Sigmoid colon (tissue), 7 donors: ENCODE measurements at regions of chr6 and their contacts with region 1.

Region 1: DNA sequence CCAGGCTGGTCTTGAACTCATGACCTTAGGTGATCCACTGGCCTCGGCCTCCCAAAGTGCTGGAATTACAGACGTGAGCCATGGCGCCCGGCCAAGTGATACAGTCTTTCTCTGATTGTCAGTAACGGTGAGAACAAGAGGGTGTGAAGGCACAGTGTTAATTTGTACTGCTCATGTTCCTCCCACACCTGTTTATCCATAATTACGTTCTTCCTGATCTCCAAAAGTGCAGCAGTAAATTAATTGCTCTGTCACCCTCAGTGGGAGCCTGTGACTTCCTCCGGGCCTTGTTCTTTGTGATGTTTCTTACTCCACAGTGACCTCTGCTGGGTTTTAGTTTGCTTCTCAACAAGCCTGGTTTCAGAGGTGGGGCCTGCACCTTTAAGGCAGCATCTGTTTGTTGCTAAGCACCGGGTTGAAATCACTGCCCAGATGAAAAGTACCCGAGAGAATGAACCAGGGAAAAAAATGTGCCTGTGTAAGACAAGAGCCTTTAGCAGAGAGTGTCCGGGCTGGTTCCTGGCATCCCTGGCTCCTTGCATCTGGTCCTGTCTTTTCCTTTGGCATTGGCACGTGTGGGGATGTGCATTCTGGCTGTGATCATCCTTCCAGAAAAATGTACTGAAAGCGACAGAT is 89.1 kb upstream of the CLDN20 start:
- DNase-seq: peak; percentile 69
- H3K4me3 ChIP-seq: no peak overlapping the region
- H3K27ac ChIP-seq: peak overlapping the region in 1 of 4 donors; percentile 46
- H3K4me1 ChIP-seq: peaks cover 0 to 28% (median 21%) of the 10 kb centered on the region in 4 donors
- H3K27me3 ChIP-seq: no peaks in the 10 kb centered on the region
- CTCF ChIP-seq: peak; percentile 34 to 65 (median 54)
- EP300 ChIP-seq: no peak
- POLR2A ChIP-seq: no peak

Region 2: DNA sequence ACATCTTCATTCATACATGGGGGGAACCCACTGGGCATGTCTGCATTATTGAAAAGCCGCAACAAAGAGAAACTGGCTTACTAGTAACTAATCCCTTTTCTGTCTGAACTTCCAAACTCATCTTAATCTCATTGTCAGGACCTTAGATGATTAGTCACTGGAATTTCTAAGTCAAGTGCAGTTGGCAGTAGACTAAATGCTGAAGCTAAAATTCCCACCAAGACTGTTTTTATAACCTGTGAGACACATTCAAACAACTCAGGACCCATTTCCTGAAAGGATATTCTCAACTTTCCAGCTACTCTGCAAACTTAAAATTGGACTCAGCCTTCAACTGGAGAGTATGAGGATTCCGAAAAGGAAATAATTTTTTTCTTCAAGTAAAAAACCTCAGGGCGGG is 536.3 kb before region 1 on chr6:
- intact Hi-C with region 1: no loop called
- DNase-seq: no peak
- H3K4me3 ChIP-seq: no peak overlapping the region
- H3K27ac ChIP-seq: peak overlapping the region in 1 of 4 donors; percentile 2
- H3K4me1 ChIP-seq: no peaks in the 10 kb centered on the region
- H3K27me3 ChIP-seq: no peaks in the 10 kb centered on the region
- CTCF ChIP-seq: no peak
- EP300 ChIP-seq: no peak
- POLR2A ChIP-seq: no peak

Region 3: DNA sequence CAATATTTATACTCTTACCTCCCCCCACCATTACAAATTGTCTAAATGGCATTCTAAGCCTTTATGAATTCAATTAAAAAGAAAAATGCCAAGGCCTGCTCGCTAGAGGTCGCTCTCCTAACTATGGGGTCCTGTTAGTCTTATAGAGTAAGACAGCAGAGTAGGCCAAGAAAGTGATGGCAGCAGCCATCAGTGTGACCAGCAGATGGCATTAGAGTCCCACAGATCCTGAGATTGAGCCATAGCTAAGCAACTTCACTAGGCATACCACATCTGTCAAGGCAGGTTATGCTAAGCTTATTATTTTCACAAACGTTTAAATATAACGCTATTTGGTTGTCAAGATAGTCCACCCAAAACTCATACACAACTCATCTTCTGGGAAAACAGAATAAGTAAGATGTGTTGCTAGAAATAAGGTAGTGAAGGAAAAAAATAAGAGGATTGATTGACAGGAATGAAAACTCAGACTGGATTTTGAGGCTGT is 499.0 kb before region 1 on chr6:
- intact Hi-C with region 1: loop called (anchors 2 kb)
- DNase-seq: peak; percentile 92
- H3K4me3 ChIP-seq: no peak overlapping the region
- H3K27ac ChIP-seq: no peak overlapping the region
- H3K4me1 ChIP-seq: peaks cover 0 to 3% (median 0%) of the 10 kb centered on the region in 4 donors
- H3K27me3 ChIP-seq: no peaks in the 10 kb centered on the region
- CTCF ChIP-seq: peak; percentile 96 to 99 (median 98)
- EP300 ChIP-seq: no peak
- POLR2A ChIP-seq: no peak

Region 4: GRCh38 chr6:154733012-154733625 is 441.6 kb before region 1 on chr6 and contains the start of gene SCAF8:
- intact Hi-C with region 1: loop called (anchors 10 kb)
- DNase-seq: peak; percentile 87
- H3K4me3 ChIP-seq: peak within 1 kb of the TSS; percentile 74 to 98 (median 98)
- H3K27ac ChIP-seq: peak within 1 kb of the TSS; percentile 96 to 100 (median 100)
- H3K4me1 ChIP-seq: peaks cover 0 to 46% (median 44%) of the 10 kb centered on the region in 4 donors
- H3K27me3 ChIP-seq: no peaks in the 10 kb centered on the region
- CTCF ChIP-seq: peak in 2 of 4 experiments; percentile 19 to 84
- EP300 ChIP-seq: peak in 1 of 4 donors; percentile 1
- POLR2A ChIP-seq: peak in 1 of 2 donors; percentile 35
- total RNA-seq, gene SCAF8: 37.1 to 46.3 (median 40.8) TPM

Region 5: GRCh38 chr6:154868143-154868594 is 306.5 kb before region 1 on chr6:
- intact Hi-C with region 1: loop called (anchors 5 kb)
- DNase-seq: no peak
- H3K4me3 ChIP-seq: no peak overlapping the region
- H3K27ac ChIP-seq: no peak overlapping the region
- H3K4me1 ChIP-seq: peaks cover 0 to 8% (median 0%) of the 10 kb centered on the region in 4 donors
- H3K27me3 ChIP-seq: no peaks in the 10 kb centered on the region
- CTCF ChIP-seq: peak; percentile 39 to 68 (median 46)
- EP300 ChIP-seq: no peak
- POLR2A ChIP-seq: no peak

Region 6: DNA sequence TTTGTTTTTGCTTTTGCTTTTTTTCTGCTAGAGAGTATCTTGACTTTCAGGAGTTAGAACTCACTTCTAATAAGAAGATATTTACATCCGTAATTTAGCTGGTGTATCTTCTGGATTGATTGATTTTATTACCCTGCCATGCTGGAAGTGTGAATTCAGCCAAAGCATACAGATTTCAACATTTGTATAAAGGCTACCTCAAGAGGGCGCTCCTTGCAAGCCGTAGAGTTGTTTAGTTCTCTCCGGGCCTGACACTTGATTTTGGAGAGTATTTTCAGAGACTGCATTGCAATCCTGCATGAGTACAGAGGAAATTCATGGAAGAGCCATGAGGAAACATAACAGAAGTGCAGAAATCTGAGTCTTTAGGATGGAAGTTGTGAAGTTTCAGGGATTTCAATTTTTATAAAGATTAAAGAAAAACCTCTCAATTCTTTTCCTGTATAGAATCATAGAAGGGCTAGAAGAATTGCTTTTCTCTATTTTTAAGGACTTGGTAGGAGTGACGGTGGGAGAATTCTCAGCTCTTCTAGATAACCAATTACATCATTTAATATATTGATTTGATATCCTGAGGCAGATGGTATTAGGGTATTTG is 246.3 kb before region 1 on chr6:
- intact Hi-C with region 1: loop called (anchors 1 kb)
- DNase-seq: no peak
- H3K4me3 ChIP-seq: no peak overlapping the region
- H3K27ac ChIP-seq: no peak overlapping the region
- H3K4me1 ChIP-seq: peaks cover 0 to 19% (median 16%) of the 10 kb centered on the region in 4 donors
- H3K27me3 ChIP-seq: no peaks in the 10 kb centered on the region
- CTCF ChIP-seq: peak; percentile 26 to 65 (median 62)
- EP300 ChIP-seq: no peak
- POLR2A ChIP-seq: no peak

Region 7: DNA sequence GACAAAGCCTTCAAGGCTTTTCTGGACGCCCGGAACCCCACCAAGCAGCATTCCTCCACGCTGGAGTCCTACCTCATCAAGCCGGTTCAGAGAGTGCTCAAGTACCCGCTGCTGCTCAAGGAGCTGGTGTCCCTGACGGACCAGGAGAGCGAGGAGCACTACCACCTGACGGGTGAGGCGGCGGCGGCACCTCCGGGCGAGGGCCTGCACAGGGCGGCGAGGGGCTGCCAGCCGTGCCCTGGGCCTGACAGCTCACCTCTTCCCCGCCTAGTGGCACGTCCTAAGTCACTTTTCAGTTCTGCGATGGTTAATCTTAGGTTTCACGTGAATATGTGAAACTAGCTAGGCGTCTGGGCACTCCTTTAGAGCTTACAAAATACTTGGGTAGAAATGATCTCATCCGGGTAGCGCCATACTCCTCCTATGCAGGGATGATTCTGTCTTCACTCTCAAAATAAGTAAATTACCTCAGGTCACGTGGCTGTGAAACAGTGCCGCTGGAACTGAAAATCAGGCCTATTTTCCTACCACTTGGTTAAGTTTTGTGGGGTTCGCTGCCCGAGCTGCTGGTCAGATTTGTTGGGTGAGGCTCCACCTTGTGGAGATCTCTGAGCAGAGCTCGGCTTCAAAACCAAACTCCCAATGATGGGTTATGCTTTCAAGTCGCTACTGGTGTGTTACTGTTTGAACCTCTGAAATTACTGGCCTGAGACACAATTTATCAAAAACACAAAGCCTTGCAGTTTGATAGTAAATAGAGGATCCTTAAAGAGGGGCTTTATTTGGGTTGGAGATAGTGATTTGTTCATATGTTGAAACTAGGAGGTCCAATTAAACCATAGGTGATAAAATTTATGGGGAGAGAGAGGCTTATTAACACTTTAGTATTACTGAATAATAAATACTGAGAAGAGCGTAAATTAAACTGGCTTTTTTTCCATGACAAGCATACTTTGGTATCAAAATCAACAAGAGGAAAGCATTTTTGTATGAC is 73.6 kb after region 1 on chr6:
- intact Hi-C with region 1: loop called (anchors 1 kb)
- DNase-seq: peak; percentile 84
- H3K4me3 ChIP-seq: peak overlapping the region in 1 of 4 donors; percentile 11
- H3K27ac ChIP-seq: peak overlapping the region; percentile 48 to 83 (median 72)
- H3K4me1 ChIP-seq: peaks cover 0 to 21% (median 9%) of the 10 kb centered on the region in 4 donors
- H3K27me3 ChIP-seq: no peaks in the 10 kb centered on the region
- CTCF ChIP-seq: peak; percentile 59 to 78 (median 72)
- EP300 ChIP-seq: no peak
- POLR2A ChIP-seq: no peak

Region 8: GRCh38 chr6:155287762-155288161 is 113.1 kb after region 1 on chr6:
- intact Hi-C with region 1: no loop called
- DNase-seq: no peak
- H3K4me3 ChIP-seq: no peak overlapping the region
- H3K27ac ChIP-seq: no peak overlapping the region
- H3K4me1 ChIP-seq: no peaks in the 10 kb centered on the region
- H3K27me3 ChIP-seq: no peaks in the 10 kb centered on the region
- CTCF ChIP-seq: no peak
- EP300 ChIP-seq: no peak
- POLR2A ChIP-seq: no peak

Region 9: GRCh38 chr6:155314092-155314772 is 139.5 kb after region 1 on chr6 and contains the start of gene TFB1M:
- intact Hi-C with region 1: loop called (anchors 5 kb)
- DNase-seq: peak; percentile 99
- H3K4me3 ChIP-seq: peak within 1 kb of the TSS; percentile 59 to 83 (median 76)
- H3K27ac ChIP-seq: peak within 1 kb of the TSS; percentile 83 to 91 (median 88)
- H3K4me1 ChIP-seq: peaks cover 0 to 20% (median 4%) of the 10 kb centered on the region in 4 donors
- H3K27me3 ChIP-seq: no peaks in the 10 kb centered on the region
- CTCF ChIP-seq: no peak
- EP300 ChIP-seq: peak in 2 of 4 donors; percentile 9 to 17
- POLR2A ChIP-seq: peak; percentile 56 to 73
- total RNA-seq, gene TFB1M: 10.7 to 22.2 (median 16.8) TPM

Region 10: DNA sequence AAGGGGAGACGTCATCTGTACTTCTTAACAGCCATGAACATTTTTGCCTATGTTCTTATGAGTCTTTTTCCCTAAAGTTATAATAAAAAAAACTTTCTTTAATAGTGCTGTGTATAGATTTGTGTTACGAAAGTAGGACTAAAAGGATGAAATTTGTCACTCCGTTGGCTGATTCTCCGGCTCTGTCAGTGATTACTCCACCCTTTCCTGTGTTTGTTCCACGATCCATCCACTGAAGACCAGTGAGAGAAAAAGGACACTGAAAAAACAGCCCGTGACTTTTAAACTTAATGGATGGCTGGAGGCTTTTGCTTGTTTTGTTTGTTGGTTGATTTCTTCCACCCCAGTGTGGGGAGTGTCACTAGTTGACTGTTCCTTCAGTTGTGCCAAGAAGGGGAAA is 513.0 kb after region 1 on chr6:
- intact Hi-C with region 1: no loop called
- DNase-seq: no peak
- H3K4me3 ChIP-seq: no peak overlapping the region
- H3K27ac ChIP-seq: no peak overlapping the region
- H3K4me1 ChIP-seq: no peaks in the 10 kb centered on the region
- H3K27me3 ChIP-seq: no peaks in the 10 kb centered on the region
- CTCF ChIP-seq: no peak
- EP300 ChIP-seq: no peak
- POLR2A ChIP-seq: no peak